Lower lobe of right lung (tissue), 2 donors: ENCODE measurements at regions of chr10 and their contacts with region 1.

Region 1: GRCh38 chr10:5623081-5623748 is 43.2 kb downstream of the ASB13 start:
- DNase-seq: peak; percentile 94
- ATAC-seq: peak; percentile 95 to 97
- H3K4me3 ChIP-seq: no peak overlapping the region
- H3K27ac ChIP-seq: no peak overlapping the region
- H3K4me1 ChIP-seq: no peaks in the 10 kb centered on the region
- H3K27me3 ChIP-seq: no peaks in the 10 kb centered on the region
- CTCF ChIP-seq: peak; percentile 91

Region 2: DNA sequence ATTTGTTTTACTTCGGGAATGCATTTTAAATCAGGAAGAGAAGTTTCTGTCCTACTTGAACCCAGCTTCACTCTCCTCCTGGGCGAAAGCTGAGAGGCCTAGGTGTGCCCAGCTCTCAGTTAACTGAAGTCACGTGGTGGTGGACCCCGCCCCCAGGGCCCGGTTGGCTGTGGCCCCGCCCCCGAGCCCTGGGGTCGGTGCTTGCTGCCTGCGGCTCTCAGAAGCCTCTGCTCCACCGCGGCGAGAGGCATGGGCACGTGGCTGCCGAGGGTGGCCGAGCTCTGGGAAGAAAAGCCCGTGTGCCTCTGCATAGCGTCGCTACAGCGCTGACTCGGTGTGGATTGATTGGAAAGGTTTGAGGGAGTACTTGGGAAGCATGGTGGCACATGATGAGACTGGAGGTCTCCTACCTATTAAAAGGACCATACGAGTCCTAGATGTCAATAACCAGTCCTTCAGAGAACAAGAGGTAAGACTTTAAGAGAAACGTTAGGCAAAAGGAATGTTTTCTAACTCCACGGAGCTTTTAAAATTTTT is 176.8 kb before region 1 on chr10:
- intact Hi-C with region 1: loop called (anchors 10 kb)
- DNase-seq: peak; percentile 96
- ATAC-seq: peak; percentile 97 to 99
- H3K4me3 ChIP-seq: peak overlapping the region; percentile 56
- H3K27ac ChIP-seq: peak overlapping the region; percentile 74
- H3K4me1 ChIP-seq: peaks cover 15% of the 10 kb centered on the region
- H3K27me3 ChIP-seq: no peaks in the 10 kb centered on the region
- CTCF ChIP-seq: no peak

Region 3: DNA sequence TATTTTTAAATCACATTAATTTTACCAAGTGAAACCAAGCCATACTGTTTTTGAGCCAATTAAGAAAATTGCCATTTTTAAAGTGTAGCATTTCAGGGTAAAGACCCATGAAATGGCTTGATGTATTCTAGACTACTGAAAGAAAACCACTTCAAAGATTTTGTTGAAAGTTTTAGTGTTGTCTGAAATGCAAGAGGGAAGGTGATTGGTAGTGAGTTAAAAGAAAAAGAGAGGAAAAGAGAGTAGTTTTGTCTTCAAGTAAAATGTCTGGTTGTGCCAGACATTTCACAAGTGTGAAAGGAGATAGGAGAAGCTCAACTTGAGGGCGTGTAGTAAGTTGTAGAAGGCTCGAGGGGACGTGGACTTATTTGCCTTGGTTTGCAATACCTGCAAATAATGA is 165.5 kb before region 1 on chr10:
- intact Hi-C with region 1: no loop called
- DNase-seq: no peak
- ATAC-seq: no peak
- H3K4me3 ChIP-seq: no peak overlapping the region
- H3K27ac ChIP-seq: no peak overlapping the region
- H3K4me1 ChIP-seq: no peaks in the 10 kb centered on the region
- H3K27me3 ChIP-seq: no peaks in the 10 kb centered on the region
- CTCF ChIP-seq: no peak